B cell (primary cell): ENCODE measurements at regions of chr16 and their contacts with region 1.

Region 1: DNA sequence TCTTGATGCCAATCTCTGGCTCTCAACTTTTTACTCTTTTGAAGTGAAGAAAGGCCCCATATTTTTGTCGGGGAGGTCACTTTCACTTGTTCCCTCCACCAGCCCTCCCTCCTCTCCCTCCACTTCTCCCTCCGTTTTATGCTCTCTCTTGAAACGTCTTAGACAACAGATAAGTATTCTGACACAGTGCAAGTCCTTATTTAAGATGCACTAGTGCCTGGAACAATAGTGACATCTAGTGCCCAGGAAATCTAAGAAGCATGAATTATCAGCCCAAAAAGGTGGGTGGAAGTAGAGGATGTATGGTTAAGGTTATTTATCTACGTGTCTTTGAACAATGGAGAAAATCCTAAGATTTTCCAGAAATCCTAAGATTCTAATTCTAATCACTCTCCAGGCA is 17.9 kb downstream of the PSME3IP1 start:
- DNase-seq: peak; percentile 73
- ATAC-seq: peak; percentile 60
- H3K4me3 ChIP-seq: no peak overlapping the region
- H3K4me3 Mint-ChIP-seq: no peak overlapping the region
- H3K27ac ChIP-seq: no peak overlapping the region
- H3K27ac Mint-ChIP-seq: no peak overlapping the region
- H3K4me1 ChIP-seq: no peaks in the 10 kb centered on the region
- H3K4me1 Mint-ChIP-seq: peaks cover 8% of the 10 kb centered on the region
- H3K27me3 ChIP-seq: no peaks in the 10 kb centered on the region
- H3K27me3 Mint-ChIP-seq: no peaks in the 10 kb centered on the region
- CTCF ChIP-seq: peak; percentile 73

Region 2: GRCh38 chr16:57091975-57092785 is 75.8 kb before region 1 on chr16 and contains the start of gene CPNE2:
- CTCF ChIA-PET with region 1: interaction called, 5 read pairs
- POLR2A ChIA-PET with region 1: no interaction called
- intact Hi-C with region 1: loop called (anchors 1 kb)
- DNase-seq: peak; percentile 53
- ATAC-seq: peak; percentile 66
- H3K4me3 ChIP-seq: peak within 1 kb of the TSS in 4 of 5 experiments; percentile 28 to 66 (median 54)
- H3K4me3 Mint-ChIP-seq: peak within 1 kb of the TSS; percentile 76
- H3K27ac ChIP-seq: no peak within 1 kb of the TSS
- H3K27ac Mint-ChIP-seq: peak within 1 kb of the TSS; percentile 20
- H3K4me1 ChIP-seq: peaks cover 13 to 14% of the 10 kb centered on the region in 2 donors
- H3K4me1 Mint-ChIP-seq: peaks cover 11% of the 10 kb centered on the region
- H3K27me3 ChIP-seq: peaks cover 0 to 36% (median 10%) of the 10 kb centered on the region in 4 experiments
- H3K27me3 Mint-ChIP-seq: peaks cover 26% of the 10 kb centered on the region
- CTCF ChIP-seq: no peak
- total RNA-seq, gene CPNE2: 2.9 and 3.9 TPM in 2 replicates